PC-9 (cell line): ENCODE measurements at regions of chr5 and their contacts with region 1.

Region 1: DNA sequence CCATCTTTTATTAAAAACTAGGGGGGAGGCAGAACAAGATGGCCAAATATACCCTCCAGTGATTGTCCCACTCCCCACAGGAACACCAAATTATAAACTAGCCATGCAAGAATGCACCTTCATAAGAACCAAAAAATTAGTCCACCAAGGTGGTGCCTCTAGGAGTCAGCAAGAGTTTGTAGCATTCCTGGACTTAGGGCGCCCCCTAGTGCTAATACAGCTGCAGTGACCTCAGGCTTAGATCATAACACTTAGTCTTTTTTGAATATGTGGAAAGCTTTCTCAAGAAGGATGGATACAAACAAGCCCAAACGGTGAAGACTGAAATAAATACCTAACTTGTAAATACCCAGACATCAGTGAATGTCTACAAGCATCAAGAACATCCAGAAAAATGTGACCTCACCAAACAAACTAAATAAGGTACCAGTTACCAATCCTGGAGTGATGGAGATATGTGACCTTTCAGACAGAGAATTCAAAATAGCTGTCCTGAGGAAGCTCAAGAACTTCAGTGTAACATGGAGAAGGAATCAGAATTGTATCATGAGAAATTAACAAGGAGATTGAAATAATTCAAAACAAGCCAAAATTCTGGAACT is 19.3 kb downstream of the PPIP5K2 start:
- DNase-seq: peak; percentile 57 to 64
- H3K4me3 ChIP-seq: no peak overlapping the region
- H3K27ac ChIP-seq: no peak overlapping the region
- H3K4me1 ChIP-seq: no peaks in the 10 kb centered on the region
- H3K27me3 ChIP-seq: no peaks in the 10 kb centered on the region
- CTCF ChIP-seq: peak; percentile 94

Region 2: DNA sequence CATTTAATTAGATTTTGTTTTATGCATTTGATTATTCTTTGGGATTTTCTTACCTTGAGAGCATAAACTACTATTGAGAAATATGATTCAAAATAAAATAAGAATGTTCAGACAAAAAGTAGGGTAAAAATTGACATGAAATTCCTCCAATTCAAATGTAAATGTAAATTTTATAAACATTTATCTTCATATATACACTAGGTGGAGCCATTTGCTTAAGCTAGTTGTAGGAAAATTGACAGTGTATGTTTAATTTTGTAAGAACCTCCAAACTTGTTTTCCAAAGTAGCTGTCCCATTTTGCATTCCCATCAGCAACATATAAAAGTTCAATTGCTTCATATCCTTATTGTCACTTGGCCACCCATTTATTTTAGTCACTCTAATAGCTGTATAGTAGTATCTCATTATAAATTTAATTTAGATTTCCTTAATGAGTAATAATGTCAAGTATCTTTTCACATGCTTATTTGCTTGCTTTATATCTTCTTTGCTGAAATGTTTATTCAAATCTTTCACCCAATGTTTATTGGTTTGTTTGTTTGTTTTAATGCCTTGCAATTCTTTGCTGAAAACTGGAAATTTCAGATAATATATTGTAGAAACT is 602.9 kb before region 1 on chr5:
- CTCF ChIA-PET with region 1: interaction called, 3 read pairs
- POLR2A ChIA-PET with region 1: no interaction called
- intact Hi-C with region 1: loop called (anchors 1 kb)
- DNase-seq: no peak
- H3K4me3 ChIP-seq: no peak overlapping the region
- H3K27ac ChIP-seq: no peak overlapping the region
- H3K4me1 ChIP-seq: no peaks in the 10 kb centered on the region
- H3K27me3 ChIP-seq: no peaks in the 10 kb centered on the region
- CTCF ChIP-seq: peak; percentile 70

Region 3: GRCh38 chr5:102583276-102584124 is 555.9 kb before region 1 on chr5:
- CTCF ChIA-PET with region 1: interaction called, 3 read pairs
- POLR2A ChIA-PET with region 1: no interaction called
- intact Hi-C with region 1: loop called (anchors 2 kb)
- DNase-seq: no peak
- H3K4me3 ChIP-seq: no peak overlapping the region
- H3K27ac ChIP-seq: no peak overlapping the region
- H3K4me1 ChIP-seq: no peaks in the 10 kb centered on the region
- H3K27me3 ChIP-seq: no peaks in the 10 kb centered on the region
- CTCF ChIP-seq: peak; percentile 74

Region 4: GRCh38 chr5:102670224-102670836 is 469.0 kb before region 1 on chr5:
- CTCF ChIA-PET with region 1: no interaction called
- POLR2A ChIA-PET with region 1: no interaction called
- intact Hi-C with region 1: loop called (anchors 10 kb)
- DNase-seq: peak in 1 of 2 experiments; percentile 14
- H3K4me3 ChIP-seq: no peak overlapping the region
- H3K27ac ChIP-seq: no peak overlapping the region
- H3K4me1 ChIP-seq: peaks cover 16% of the 10 kb centered on the region
- H3K27me3 ChIP-seq: no peaks in the 10 kb centered on the region
- CTCF ChIP-seq: peak; percentile 79

Region 5: DNA sequence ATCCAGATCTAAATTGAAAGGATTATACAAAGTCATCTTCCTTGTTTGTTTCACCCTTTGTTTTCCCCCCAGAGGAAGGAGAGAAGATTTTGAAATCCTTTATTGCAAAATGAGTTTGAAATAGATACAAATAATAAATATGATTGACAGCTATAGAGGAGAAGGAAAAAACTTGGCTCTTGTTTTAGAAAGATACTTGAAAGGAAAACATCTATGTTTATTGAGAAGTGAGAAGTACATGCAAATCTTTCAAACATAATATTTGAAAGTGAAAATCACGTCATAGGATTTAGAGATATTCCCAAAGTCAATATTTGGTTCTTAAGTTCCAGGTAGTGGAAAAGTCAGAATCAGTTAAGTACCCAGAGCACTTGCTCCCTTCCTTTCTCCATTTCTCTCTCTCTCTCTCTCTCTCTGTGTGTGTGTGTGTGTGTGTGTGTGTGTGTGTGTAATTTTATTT is 357.0 kb before region 1 on chr5:
- CTCF ChIA-PET with region 1: no interaction called
- POLR2A ChIA-PET with region 1: no interaction called
- intact Hi-C with region 1: loop called (anchors 5 kb)
- DNase-seq: no peak
- H3K4me3 ChIP-seq: no peak overlapping the region
- H3K27ac ChIP-seq: no peak overlapping the region
- H3K4me1 ChIP-seq: peaks cover 5% of the 10 kb centered on the region; the same call in 1 of the 2 replicates
- H3K27me3 ChIP-seq: no peaks in the 10 kb centered on the region
- CTCF ChIP-seq: no peak

Region 6: GRCh38 chr5:103041071-103041676 is 98.2 kb before region 1 on chr5:
- CTCF ChIA-PET with region 1: no interaction called
- POLR2A ChIA-PET with region 1: no interaction called
- intact Hi-C with region 1: loop called (anchors 2 kb)
- DNase-seq: peak in 1 of 2 experiments; percentile 57
- H3K4me3 ChIP-seq: no peak overlapping the region
- H3K27ac ChIP-seq: no peak overlapping the region
- H3K4me1 ChIP-seq: 0 out of 2 replicates have a peak, but pooled peaks cover 6% of the 10 kb centered on the region
- H3K27me3 ChIP-seq: no peaks in the 10 kb centered on the region
- CTCF ChIP-seq: peak; percentile 64